ENCODE measurements at regions of chr21 and their contacts with region 1.

Region 1: DNA sequence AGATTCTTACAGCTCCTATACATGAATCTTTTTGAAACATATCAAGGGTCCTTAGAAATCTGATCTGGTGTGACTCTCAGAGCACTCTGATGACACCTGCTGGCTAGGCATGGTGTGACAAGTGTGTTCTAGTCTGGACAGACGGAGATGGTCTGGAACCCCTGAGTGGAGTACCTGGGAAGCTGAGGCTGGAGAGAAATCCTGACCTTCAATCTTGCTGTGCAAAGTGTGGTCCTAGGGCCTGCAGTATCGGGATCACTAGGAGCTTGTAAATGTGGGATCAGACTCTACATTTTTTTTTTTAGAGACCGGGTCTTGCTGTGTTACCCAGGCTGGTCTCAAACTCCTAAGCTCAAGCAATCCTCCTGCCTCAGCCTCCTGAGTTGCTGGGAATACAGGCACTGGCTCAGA is 78.6 kb upstream of the SOD1 start:
- DNase-seq: no peak

Region 2: DNA sequence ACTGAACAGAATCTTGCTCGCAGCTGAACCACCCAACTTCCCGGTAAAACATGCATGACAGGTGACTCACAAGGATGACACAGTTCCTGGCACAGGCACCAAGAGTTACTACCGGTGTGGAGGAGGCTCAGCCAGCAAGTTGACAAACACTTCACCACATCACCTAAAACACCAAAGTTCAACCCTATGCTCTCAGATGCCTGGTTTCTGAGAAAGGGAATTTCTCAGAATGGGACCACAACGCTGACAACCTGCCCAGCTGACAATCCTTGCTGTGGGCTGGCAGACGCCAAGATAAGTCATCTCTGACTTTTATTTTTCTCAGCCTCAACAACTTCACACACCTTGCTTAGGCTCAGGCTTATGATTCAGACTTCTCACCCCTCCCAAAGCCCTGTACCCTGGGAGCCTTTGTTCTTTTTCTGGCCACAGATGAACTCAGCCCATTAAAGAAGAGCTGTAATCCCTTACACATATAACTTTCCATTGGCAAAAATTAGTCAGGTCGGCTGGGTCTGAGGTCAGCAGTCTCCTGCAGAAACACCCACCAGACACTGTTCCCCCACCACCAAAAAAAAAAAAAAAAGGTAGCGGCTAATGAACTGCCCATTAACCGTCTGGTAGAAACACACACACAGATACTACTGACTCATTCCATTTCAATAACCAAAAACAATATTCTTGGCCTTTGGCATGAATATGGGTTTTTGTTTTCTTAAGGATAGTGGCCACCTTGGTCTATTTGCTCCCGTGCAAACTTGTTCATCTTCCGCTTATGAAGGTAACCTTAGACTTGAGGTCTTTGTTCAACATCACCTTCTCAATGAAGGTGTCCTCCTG is 226.0 kb before region 1 on chr21:
- intact Hi-C with region 1: loop called (anchors 10 kb)
- DNase-seq: no peak

Region 3: DNA sequence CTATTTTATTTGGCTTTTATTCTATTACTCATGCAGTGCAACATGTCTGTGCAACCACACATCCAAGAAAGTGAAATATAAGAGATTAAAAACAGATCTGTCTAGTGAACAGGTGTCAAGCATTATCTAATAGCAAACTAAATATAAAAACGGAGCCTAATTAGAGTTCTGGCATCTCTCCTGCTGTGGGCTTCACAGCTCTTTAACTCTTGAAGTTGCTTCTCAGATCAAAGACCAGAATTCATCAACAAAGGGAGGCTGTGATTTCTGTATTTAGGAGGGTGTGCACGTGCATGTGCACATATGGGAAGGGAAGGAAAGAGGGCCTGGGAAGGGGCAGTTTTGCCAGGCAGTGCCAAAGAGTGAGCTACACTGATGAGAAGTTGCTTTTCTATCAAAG is 617.0 kb after region 1 on chr21:
- intact Hi-C with region 1: no loop called
- DNase-seq: no peak

Measured in cardiac septum (tissue), 1 donor.